SK-N-SH (cell line): ENCODE measurements at regions of chr4 and their contacts with region 1.

Region 1: DNA sequence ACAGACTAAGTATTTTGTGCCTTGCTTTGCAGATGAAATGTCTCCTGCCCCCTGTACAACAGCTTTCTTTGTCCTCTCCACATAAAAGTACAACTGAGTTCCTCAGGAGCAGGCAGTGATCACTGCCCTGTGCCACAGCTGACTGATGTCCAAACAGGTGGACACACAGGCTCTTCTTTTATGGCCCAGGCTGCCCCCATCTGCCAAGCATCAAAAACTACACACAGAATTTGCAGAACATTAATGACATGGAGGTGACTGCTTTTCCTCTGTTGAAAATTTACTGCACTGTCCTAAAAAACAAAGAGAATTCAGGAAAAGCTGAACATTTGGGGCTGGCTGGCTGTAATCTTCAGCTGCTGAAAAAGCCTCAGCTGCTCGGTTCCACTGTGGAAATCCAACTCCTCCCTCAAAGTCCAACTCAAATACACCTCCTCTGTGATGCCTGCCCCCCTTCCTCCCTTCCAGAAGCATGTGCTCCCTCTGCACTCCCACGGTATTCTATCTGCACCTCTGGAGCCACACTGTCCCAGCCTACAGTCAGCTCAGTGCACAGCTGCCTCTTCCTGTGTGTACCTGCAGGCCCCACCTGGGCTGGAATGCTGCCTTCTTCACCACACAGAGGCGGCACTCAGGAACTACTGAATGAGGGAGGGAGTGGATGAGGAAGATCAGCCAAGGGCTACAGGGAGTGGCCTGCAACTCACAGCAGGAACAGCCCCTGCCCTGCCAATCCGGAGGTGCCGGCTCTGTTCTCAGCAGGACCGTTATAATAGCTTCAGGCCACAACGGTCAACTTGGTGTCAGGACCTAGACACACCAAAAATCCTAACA is 10.3 kb downstream of the AFAP1 start:
- DNase-seq: peak; percentile 66
- H3K4me3 ChIP-seq: no peak overlapping the region
- H3K27ac ChIP-seq: peak overlapping the region; percentile 23 to 66; a peak in 3 of 4 replicates
- H3K4me1 ChIP-seq: peaks cover 21 to 26% of the 10 kb centered on the region in 2 experiments; a peak in 3 of 4 replicates
- H3K27me3 ChIP-seq: no peaks in the 10 kb centered on the region
- CTCF ChIP-seq: peak; percentile 50
- EP300 ChIP-seq: no peak
- RAD21 ChIP-seq: peak; percentile 88

Region 2: DNA sequence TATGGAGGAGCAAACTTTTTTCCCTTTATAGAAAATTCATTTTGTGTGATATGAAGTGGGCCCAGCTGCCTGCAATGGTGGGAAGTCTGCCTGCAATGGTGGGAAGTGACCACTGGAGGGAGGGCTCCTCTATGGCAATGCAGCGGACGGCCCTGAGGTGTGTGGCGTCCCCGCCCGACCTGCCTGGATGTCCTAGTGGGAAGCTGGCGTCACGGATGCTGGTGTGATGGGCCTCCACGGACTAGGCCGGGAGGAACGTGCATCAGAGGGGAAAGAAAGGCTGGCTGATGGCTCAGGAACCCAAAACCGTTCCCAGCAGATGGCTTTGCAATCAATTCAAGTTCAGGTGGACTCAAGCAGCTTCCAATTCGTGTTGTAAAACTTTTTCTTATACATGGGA is 167.6 kb before region 1 on chr4:
- CTCF ChIA-PET with region 1: interaction called, 15 read pairs
- POLR2A ChIA-PET with region 1: no interaction called
- DNase-seq: peak; percentile 91
- H3K4me3 ChIP-seq: no peak overlapping the region; a peak in 1 of 4 replicates
- H3K27ac ChIP-seq: no peak overlapping the region; a peak in 1 of 4 replicates
- H3K4me1 ChIP-seq: peaks cover 0 to 4% of the 10 kb centered on the region in 2 experiments; a peak in 1 of 4 replicates
- H3K27me3 ChIP-seq: no peaks in the 10 kb centered on the region
- CTCF ChIP-seq: peak; percentile 72
- EP300 ChIP-seq: no peak
- RAD21 ChIP-seq: peak; percentile 73

Region 3: GRCh38 chr4:7811536-7812191 is 117.7 kb before region 1 on chr4:
- CTCF ChIA-PET with region 1: interaction called, 231 read pairs
- POLR2A ChIA-PET with region 1: no interaction called
- DNase-seq: no peak
- H3K4me3 ChIP-seq: no peak overlapping the region
- H3K27ac ChIP-seq: peak overlapping the region in 1 of 2 experiments; percentile 55; a peak in 1 of 4 replicates
- H3K4me1 ChIP-seq: peaks cover 5 to 54% of the 10 kb centered on the region in 2 experiments; a peak in 3 of 4 replicates
- H3K27me3 ChIP-seq: no peaks in the 10 kb centered on the region
- CTCF ChIP-seq: no peak
- EP300 ChIP-seq: no peak
- RAD21 ChIP-seq: no peak

Region 4: DNA sequence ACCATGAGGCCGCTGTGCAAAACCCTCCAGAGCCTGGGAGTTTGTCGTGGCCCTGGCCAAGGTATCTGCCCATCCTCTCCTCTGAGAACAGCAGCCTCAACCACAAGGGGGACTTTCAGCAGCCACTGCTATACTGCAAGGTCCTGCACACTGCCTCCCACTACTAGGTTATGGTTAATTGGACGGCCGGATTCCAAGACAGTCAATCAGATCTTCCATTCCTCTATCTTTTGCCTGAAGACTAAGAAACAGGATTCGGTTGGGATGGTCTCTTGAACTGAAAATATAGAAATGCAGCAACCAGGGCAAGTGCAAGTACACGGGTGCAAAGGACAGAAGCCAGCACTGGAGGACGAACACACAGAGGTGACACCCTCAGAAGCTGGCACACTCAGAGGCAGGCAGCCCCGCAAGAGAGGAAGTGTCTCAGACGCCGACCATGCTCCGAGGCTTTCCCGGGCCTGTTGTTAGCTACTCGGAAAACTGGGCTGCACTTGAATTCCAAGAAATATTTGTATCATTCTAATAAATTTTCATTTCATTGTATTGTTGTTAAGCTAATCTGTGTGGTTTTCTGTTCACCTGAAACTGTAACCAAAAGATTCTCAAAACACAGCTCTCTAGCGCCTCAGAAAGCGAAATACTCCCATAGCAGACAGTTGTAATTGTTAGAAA is 53.0 kb before region 1 on chr4:
- CTCF ChIA-PET with region 1: interaction called, 33 read pairs
- POLR2A ChIA-PET with region 1: no interaction called
- DNase-seq: peak; percentile 54
- H3K4me3 ChIP-seq: peak overlapping the region; percentile 13 to 15; a peak in 2 of 4 replicates
- H3K27ac ChIP-seq: peak overlapping the region; percentile 91 to 93
- H3K4me1 ChIP-seq: peaks cover 57 to 71% of the 10 kb centered on the region in 2 experiments
- H3K27me3 ChIP-seq: no peaks in the 10 kb centered on the region
- CTCF ChIP-seq: peak; percentile 61
- EP300 ChIP-seq: no peak
- RAD21 ChIP-seq: peak; percentile 50

Region 5: GRCh38 chr4:7910952-7911578 is 18.3 kb before region 1 on chr4:
- CTCF ChIA-PET with region 1: interaction called, 29 read pairs
- POLR2A ChIA-PET with region 1: interaction called, 3 read pairs
- DNase-seq: peak; percentile 67
- H3K4me3 ChIP-seq: 0 out of 4 replicates have a peak overlapping the region, but pooled peaks of 1 of the 2 experiments have one; percentile 7
- H3K27ac ChIP-seq: peak overlapping the region; percentile 96 to 97
- H3K4me1 ChIP-seq: peaks cover 58 to 69% of the 10 kb centered on the region in 2 experiments
- H3K27me3 ChIP-seq: no peaks in the 10 kb centered on the region
- CTCF ChIP-seq: no peak
- EP300 ChIP-seq: no peak
- RAD21 ChIP-seq: no peak

Region 6: GRCh38 chr4:7939377-7940108 is 10.2 kb after region 1 on chr4 and contains the start of gene AFAP1:
- CTCF ChIA-PET with region 1: interaction called, 12 read pairs
- POLR2A ChIA-PET with region 1: interaction called, 3 read pairs
- DNase-seq: peak; percentile 99
- H3K4me3 ChIP-seq: peak within 1 kb of the TSS; percentile 83 to 95
- H3K27ac ChIP-seq: peak within 1 kb of the TSS; percentile 82 to 85
- H3K4me1 ChIP-seq: peaks cover 15% of the 10 kb centered on the region in 2 experiments; a peak in 2 of 4 replicates
- H3K27me3 ChIP-seq: no peaks in the 10 kb centered on the region
- CTCF ChIP-seq: no peak
- EP300 ChIP-seq: no peak
- RAD21 ChIP-seq: no peak
- polyA plus RNA-seq, gene AFAP1: 40.6 and 67.9 TPM in 2 replicates

Region 7: DNA sequence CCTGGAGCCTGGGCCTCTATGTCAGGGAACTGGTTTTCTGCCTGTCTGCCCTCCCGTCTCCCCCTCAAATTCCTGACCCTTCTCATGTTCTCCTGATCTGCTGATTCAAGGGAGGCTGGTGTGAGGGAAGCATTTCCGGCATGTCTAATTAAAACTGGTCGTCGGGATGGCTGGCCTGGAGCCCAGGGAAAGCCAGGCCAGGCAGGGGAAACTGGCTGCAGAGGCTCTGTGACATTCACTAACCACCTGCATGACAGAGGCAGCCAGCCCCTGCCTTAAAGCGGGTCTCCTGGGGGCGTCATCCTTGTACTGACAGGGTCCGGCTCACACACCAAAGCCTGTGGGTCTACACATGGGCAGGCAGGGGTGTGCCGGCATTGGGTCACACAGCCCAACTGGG is 194.1 kb after region 1 on chr4:
- CTCF ChIA-PET with region 1: no interaction called
- POLR2A ChIA-PET with region 1: no interaction called
- DNase-seq: peak; percentile 75
- H3K4me3 ChIP-seq: no peak overlapping the region
- H3K27ac ChIP-seq: peak overlapping the region in 1 of 2 experiments; percentile 62; a peak in 1 of 4 replicates
- H3K4me1 ChIP-seq: peaks cover 0 to 65% of the 10 kb centered on the region in 2 experiments; a peak in 2 of 4 replicates
- H3K27me3 ChIP-seq: no peaks in the 10 kb centered on the region; the same call in 1 of the 2 replicates
- CTCF ChIP-seq: no peak
- EP300 ChIP-seq: peak in 1 of 2 experiments; percentile 69; a peak in 2 of 4 replicates
- RAD21 ChIP-seq: no peak